ENCODE measurements at regions of chr20 and their contacts with region 1.

Region 1: DNA sequence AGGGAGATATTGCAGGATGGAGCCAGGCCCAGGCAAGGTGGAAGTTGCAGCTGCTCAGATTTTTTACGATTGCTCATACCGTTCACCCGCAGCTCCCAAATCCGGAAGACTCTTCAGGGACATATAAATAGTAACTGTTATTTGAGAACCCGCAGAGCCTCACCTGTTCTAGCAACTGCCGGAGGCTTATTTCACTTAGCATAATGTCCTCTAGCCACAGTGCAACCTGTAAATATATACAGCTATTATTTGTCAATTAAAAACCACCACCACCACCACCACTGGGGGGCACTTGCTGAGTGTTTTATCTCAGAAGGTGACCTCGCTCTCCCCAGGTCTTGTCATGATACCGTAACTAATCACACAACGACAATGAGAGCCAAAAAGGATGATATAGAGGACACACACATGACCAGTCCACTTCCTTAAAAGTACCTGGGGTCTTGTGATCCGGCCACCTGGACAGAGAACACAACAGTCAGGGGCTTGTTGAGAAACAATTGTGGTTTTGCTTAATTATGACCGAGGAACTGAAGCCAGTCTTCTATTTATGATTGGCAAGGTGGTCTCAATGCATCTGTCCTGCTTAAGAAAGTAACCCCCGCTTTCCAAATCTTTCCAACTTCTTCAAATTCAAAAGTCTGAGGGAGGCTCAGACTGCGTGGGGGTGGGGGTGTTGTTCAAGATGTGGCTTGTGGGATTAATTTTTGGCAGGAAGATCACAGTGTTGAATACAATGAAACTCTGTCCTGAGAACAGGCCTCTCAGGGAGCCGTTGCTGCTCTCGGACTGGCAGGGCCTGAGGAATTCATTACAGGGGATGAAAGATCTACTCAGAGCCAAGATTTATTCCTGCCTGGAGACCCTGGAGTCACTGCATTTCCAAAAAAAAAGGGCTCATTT is 107.7 kb upstream of the PRND start:
- DNase-seq: peak; percentile 69
- H3K4me3 ChIP-seq: no peak overlapping the region
- H3K27ac ChIP-seq: no peak overlapping the region
- H3K4me1 ChIP-seq: no peaks in the 10 kb centered on the region
- H3K27me3 ChIP-seq: peaks cover 0 to 2% of the 10 kb centered on the region in 2 experiments
- CTCF ChIP-seq: peak; percentile 50 to 53
- POLR2A ChIP-seq: no peak

Region 2: DNA sequence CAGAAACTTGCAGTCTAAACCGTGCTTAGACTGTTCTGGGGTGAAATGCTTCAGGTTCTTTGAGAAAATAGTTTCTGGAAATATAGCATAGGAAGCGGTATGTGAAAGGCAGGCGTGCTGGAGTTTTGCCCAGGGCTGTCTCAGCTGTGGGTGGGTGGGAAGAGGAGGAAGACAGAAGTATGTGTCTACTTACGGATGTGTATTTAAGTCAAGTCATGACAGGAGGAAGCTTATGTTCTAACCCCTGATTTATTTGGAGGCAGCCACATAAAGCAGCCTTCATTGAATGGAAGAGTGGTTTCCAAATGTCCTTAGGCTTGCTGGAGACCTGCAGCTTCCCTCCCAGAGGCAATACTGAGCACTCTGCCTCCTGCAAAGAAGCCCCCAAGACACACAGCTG is 238.1 kb before region 1 on chr20:
- CTCF ChIA-PET with region 1: no interaction called
- POLR2A ChIA-PET with region 1: no interaction called
- dilution Hi-C with region 1: no loop called
- intact Hi-C with region 1: no loop called
- DNase-seq: no peak
- H3K4me3 ChIP-seq: no peak overlapping the region
- H3K27ac ChIP-seq: no peak overlapping the region
- H3K4me1 ChIP-seq: no peaks in the 10 kb centered on the region
- H3K27me3 ChIP-seq: peaks cover 10 to 16% of the 10 kb centered on the region in 2 experiments
- CTCF ChIP-seq: no peak
- POLR2A ChIP-seq: no peak

Region 3: GRCh38 chr20:4601630-4602296 is 12.2 kb before region 1 on chr20:
- CTCF ChIA-PET with region 1: interaction called, 19 read pairs
- POLR2A ChIA-PET with region 1: no interaction called
- dilution Hi-C with region 1: no loop called
- intact Hi-C with region 1: no loop called
- DNase-seq: peak; percentile 26
- H3K4me3 ChIP-seq: no peak overlapping the region
- H3K27ac ChIP-seq: no peak overlapping the region
- H3K4me1 ChIP-seq: no peaks in the 10 kb centered on the region
- H3K27me3 ChIP-seq: peaks cover 25 to 48% of the 10 kb centered on the region in 2 experiments
- CTCF ChIP-seq: no peak
- POLR2A ChIP-seq: no peak

Region 4: DNA sequence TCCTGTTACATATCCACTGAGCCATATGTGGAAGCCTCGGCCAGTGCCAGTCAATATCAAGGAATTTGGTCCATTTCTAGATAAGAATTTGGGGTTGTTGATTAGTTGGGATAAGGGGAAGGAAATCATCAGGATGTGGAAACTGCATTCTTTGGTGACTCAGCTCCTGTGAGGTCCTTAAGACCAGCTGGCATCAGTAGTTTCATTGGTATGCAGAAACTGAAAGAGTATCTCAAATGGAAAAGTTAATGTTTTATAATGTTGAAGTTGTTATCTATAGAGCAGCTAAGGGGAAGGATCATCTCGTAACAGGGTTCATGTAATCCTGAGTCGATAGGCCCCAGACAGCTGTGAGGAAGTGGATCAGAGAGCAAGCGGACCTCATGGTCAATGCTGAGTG is 19.8 kb after region 1 on chr20:
- CTCF ChIA-PET with region 1: interaction called, 29 read pairs
- POLR2A ChIA-PET with region 1: no interaction called
- dilution Hi-C with region 1: no loop called
- intact Hi-C with region 1: loop called (anchors 1 kb)
- DNase-seq: peak; percentile 88
- H3K4me3 ChIP-seq: no peak overlapping the region
- H3K27ac ChIP-seq: peak overlapping the region; percentile 80
- H3K4me1 ChIP-seq: peaks cover 16% of the 10 kb centered on the region
- H3K27me3 ChIP-seq: peaks cover 0 to 2% of the 10 kb centered on the region in 2 experiments
- CTCF ChIP-seq: no peak
- POLR2A ChIP-seq: no peak

Region 5: DNA sequence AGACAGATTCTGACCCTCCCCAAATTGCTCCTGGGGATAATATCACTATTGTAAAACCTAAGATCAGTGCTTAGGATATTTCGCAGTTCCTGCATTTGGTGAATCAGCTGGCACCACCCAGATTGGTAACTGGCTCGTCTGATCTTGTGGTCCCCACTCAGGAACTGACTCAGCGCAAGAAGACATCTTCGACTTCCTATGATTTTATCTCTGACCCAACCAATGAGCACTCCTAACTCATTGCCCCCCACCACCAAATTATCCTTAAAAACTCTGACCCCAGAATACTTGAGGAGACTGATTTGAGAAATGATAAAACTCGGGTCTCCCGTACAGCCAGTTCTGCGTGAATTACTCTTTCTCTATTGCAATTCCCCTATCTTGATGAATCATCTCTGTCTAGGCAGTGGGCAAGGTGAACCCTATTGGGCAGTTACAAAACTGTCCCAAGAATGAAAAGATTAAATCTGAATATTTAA is 52.1 kb after region 1 on chr20:
- CTCF ChIA-PET with region 1: interaction called, 27 read pairs
- POLR2A ChIA-PET with region 1: no interaction called
- dilution Hi-C with region 1: no loop called
- intact Hi-C with region 1: no loop called
- DNase-seq: peak; percentile 42
- H3K4me3 ChIP-seq: peak overlapping the region in 1 of 3 experiments; percentile 17
- H3K27ac ChIP-seq: peak overlapping the region; percentile 58
- H3K4me1 ChIP-seq: peaks cover 20% of the 10 kb centered on the region
- H3K27me3 ChIP-seq: no peaks in the 10 kb centered on the region
- CTCF ChIP-seq: no peak
- POLR2A ChIP-seq: no peak

Region 6: GRCh38 chr20:4697189-4697833 is 83.3 kb after region 1 on chr20:
- CTCF ChIA-PET with region 1: interaction called, 23 read pairs
- POLR2A ChIA-PET with region 1: no interaction called
- dilution Hi-C with region 1: no loop called
- intact Hi-C with region 1: no loop called
- DNase-seq: no peak
- H3K4me3 ChIP-seq: no peak overlapping the region
- H3K27ac ChIP-seq: no peak overlapping the region
- H3K4me1 ChIP-seq: no peaks in the 10 kb centered on the region
- H3K27me3 ChIP-seq: no peaks in the 10 kb centered on the region
- CTCF ChIP-seq: no peak
- POLR2A ChIP-seq: no peak

Region 7: GRCh38 chr20:4720041-4720976 is 106.3 kb after region 1 on chr20:
- CTCF ChIA-PET with region 1: interaction called, 272 read pairs
- POLR2A ChIA-PET with region 1: no interaction called
- dilution Hi-C with region 1: no loop called
- intact Hi-C with region 1: loop called (anchors 1 kb)
- DNase-seq: peak; percentile 69
- H3K4me3 ChIP-seq: no peak overlapping the region
- H3K27ac ChIP-seq: no peak overlapping the region
- H3K4me1 ChIP-seq: no peaks in the 10 kb centered on the region
- H3K27me3 ChIP-seq: peaks cover 3 to 6% of the 10 kb centered on the region in 2 experiments
- CTCF ChIP-seq: peak; percentile 60 to 74
- POLR2A ChIP-seq: no peak

Region 8: DNA sequence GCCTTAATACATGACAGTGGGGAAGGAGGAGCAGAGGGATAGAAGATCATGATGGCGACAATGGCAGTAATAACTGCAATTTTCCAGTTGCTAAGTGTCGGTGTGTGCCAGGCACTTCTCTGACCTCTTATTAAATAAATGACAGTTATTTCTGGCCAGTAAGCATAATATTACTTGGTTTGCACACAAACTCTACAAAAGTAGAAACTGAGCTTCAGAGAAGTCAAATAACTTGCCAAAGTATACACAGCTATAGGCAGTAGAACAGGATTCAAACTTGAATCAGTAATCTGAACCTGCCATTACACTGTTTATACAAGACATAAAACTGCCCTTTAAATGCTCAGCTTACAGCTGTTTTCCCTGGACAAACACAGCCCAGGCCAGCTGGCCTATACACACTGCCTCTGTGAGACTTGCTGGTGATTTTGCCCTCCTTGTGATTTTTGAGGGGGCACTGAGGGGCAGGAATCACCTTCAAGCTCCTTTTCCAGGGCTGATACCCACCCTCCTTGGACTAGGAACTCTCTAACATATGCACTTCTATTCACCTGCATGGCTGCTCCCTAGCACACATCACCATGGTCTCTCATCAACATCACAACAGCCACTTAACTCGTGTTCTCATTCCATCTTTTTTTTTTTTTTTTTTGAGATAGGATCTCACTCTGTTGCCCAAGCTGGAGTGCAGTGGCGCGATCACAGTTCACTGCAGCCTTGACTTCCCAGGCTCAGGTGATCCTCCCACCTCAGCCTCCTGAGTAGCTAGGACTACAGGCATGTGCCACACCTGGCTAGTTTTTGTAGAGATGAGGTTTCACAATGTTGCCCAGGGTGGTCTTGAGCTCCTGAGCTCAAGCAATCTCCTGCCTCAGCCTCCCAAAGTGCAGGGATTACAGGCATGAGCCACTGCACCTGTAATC is 323.7 kb after region 1 on chr20:
- CTCF ChIA-PET with region 1: no interaction called
- POLR2A ChIA-PET with region 1: no interaction called
- dilution Hi-C with region 1: no loop called
- intact Hi-C with region 1: no loop called
- DNase-seq: peak; percentile 52
- H3K4me3 ChIP-seq: no peak overlapping the region
- H3K27ac ChIP-seq: no peak overlapping the region
- H3K4me1 ChIP-seq: no peaks in the 10 kb centered on the region
- H3K27me3 ChIP-seq: no peaks in the 10 kb centered on the region
- CTCF ChIP-seq: no peak
- POLR2A ChIP-seq: no peak

Region 9: DNA sequence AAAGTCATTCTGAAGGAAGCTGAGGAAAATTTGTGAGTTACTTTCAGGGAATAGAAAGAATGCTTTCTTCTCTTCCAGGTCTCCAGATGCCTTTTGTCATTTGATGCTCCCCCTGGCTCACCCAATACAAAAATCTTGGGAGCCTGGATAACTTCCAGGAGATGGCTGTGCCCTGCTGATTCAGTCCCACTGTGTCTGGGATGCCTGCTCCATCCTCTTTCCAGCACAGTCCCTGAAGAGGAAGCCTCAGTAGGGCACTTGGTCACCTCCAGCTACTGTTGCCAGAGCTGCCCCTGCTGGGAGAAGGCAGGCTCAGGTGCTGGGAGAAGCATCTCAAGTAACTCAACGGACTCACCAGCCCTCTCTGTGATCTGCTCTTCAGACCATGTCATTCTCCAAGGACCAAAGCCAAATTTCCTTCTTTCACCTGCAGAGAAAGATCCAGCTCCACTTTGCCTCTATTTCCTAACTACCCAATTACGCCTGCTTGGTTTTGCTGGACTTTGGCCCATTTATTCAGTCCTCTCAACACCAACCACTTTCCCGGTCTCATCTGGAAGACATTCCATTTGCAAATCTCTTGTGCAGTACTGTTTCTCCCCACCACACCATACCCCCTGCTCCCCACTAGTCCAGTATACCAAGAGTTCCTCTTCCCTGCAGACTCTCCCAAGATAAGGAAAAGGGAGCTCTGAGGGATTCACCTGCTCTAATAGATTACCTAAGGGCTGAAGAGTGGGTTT is 334.0 kb after region 1 on chr20:
- CTCF ChIA-PET with region 1: no interaction called
- POLR2A ChIA-PET with region 1: no interaction called
- dilution Hi-C with region 1: no loop called
- intact Hi-C with region 1: no loop called
- DNase-seq: no peak
- H3K4me3 ChIP-seq: no peak overlapping the region
- H3K27ac ChIP-seq: no peak overlapping the region
- H3K4me1 ChIP-seq: peaks cover 12% of the 10 kb centered on the region
- H3K27me3 ChIP-seq: no peaks in the 10 kb centered on the region
- CTCF ChIP-seq: no peak
- POLR2A ChIP-seq: no peak